ENCODE measurements at regions of chr1 and their contacts with region 1.

Region 1: GRCh38 chr1:150561974-150562445 is 12.8 kb downstream of the ADAMTSL4 start:
- DNase-seq: peak; percentile 98
- H3K4me3 Mint-ChIP-seq: peak overlapping the region; percentile 74
- H3K27ac Mint-ChIP-seq: peak overlapping the region; percentile 99
- H3K4me1 Mint-ChIP-seq: peaks cover 52% of the 10 kb centered on the region
- H3K27me3 Mint-ChIP-seq: no peaks in the 10 kb centered on the region
- CTCF ChIP-seq: no peak

Region 2: DNA sequence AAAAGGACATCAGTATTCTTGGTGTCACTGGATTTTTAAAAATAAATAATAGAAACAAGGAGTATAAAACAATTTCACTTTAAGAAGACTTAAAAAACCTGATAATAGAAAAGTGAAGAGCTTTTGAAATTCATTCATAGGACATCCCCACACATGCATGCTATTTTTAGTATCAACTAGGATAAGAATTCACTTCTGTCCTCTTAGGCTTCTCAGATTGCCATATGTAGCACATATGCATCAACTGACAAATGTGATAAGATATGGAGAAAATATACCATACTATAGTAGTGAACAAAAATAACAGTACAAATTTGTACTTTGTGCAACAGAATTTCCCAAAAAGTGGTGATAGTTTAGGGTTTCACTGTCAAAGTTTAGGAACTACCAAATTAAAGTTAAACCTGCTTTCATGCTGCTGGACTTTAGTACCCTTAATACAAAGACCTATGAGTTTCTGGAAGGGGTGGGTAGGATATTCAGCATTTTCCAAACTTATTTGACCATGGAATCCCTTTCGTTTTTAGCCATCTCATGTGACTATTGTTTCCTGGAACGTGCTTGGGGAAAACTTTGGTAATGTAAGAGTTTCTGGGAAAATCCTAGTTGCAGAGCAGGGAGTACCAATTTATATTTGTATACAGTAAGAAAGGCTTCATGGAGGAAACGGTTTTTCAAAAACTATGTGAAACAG is 178.2 kb before region 1 on chr1:
- CTCF ChIA-PET with region 1: no interaction called
- POLR2A ChIA-PET with region 1: no interaction called
- intact Hi-C with region 1: no loop called
- DNase-seq: no peak
- H3K4me3 Mint-ChIP-seq: no peak overlapping the region
- H3K27ac Mint-ChIP-seq: no peak overlapping the region
- H3K4me1 Mint-ChIP-seq: peaks cover 12% of the 10 kb centered on the region
- H3K27me3 Mint-ChIP-seq: no peaks in the 10 kb centered on the region
- CTCF ChIP-seq: no peak

Region 3: GRCh38 chr1:150429805-150430204 is 132.2 kb before region 1 on chr1:
- CTCF ChIA-PET with region 1: no interaction called
- POLR2A ChIA-PET with region 1: no interaction called
- intact Hi-C with region 1: no loop called
- DNase-seq: peak; percentile 40
- H3K4me3 Mint-ChIP-seq: no peak overlapping the region
- H3K27ac Mint-ChIP-seq: no peak overlapping the region
- H3K4me1 Mint-ChIP-seq: peaks cover 5% of the 10 kb centered on the region
- H3K27me3 Mint-ChIP-seq: no peaks in the 10 kb centered on the region
- CTCF ChIP-seq: peak; percentile 29

Region 4: GRCh38 chr1:150444232-150444631 is 117.8 kb before region 1 on chr1:
- CTCF ChIA-PET with region 1: no interaction called
- POLR2A ChIA-PET with region 1: no interaction called
- intact Hi-C with region 1: no loop called
- DNase-seq: no peak
- H3K4me3 Mint-ChIP-seq: no peak overlapping the region
- H3K27ac Mint-ChIP-seq: no peak overlapping the region
- H3K4me1 Mint-ChIP-seq: no peaks in the 10 kb centered on the region
- H3K27me3 Mint-ChIP-seq: no peaks in the 10 kb centered on the region
- CTCF ChIP-seq: no peak

Region 5: DNA sequence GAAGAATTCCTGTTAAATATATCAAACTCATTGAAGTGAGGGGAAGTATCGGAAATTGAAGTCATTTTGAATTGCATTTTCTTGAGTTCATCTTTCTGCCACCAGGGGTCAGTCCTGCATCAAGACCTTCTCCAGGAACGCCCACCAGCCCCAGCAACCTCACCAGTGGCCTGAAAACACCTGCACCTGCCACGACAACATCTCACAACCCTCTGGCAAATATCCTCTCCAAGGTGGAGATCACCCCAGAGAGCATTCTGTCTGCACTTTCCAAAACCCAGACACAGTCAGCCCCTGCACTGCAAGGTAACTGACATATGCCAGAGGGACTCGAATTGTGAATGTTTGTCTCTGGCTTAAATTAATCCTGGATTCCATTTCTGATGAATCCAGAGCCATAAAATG is 97.6 kb before region 1 on chr1:
- CTCF ChIA-PET with region 1: interaction called, 12 read pairs
- POLR2A ChIA-PET with region 1: interaction called, 3 read pairs
- intact Hi-C with region 1: loop called (anchors 1 kb)
- DNase-seq: peak; percentile 72
- H3K4me3 Mint-ChIP-seq: no peak overlapping the region
- H3K27ac Mint-ChIP-seq: no peak overlapping the region
- H3K4me1 Mint-ChIP-seq: no peaks in the 10 kb centered on the region
- H3K27me3 Mint-ChIP-seq: no peaks in the 10 kb centered on the region
- CTCF ChIP-seq: peak; percentile 80

Region 6: GRCh38 chr1:150548632-150549495 is 13.1 kb before region 1 on chr1 and contains the start of gene ADAMTSL4:
- CTCF ChIA-PET with region 1: interaction called, 77 read pairs
- POLR2A ChIA-PET with region 1: interaction called, 1,801 read pairs
- intact Hi-C with region 1: no loop called
- DNase-seq: peak; percentile 80
- H3K4me3 Mint-ChIP-seq: peak within 1 kb of the TSS; percentile 81
- H3K27ac Mint-ChIP-seq: peak within 1 kb of the TSS; percentile 78
- H3K4me1 Mint-ChIP-seq: peaks cover 28% of the 10 kb centered on the region
- H3K27me3 Mint-ChIP-seq: no peaks in the 10 kb centered on the region
- CTCF ChIP-seq: peak; percentile 15
- total RNA-seq, gene ADAMTSL4: 9.6 and 13.3 TPM in 2 replicates

Region 7: DNA sequence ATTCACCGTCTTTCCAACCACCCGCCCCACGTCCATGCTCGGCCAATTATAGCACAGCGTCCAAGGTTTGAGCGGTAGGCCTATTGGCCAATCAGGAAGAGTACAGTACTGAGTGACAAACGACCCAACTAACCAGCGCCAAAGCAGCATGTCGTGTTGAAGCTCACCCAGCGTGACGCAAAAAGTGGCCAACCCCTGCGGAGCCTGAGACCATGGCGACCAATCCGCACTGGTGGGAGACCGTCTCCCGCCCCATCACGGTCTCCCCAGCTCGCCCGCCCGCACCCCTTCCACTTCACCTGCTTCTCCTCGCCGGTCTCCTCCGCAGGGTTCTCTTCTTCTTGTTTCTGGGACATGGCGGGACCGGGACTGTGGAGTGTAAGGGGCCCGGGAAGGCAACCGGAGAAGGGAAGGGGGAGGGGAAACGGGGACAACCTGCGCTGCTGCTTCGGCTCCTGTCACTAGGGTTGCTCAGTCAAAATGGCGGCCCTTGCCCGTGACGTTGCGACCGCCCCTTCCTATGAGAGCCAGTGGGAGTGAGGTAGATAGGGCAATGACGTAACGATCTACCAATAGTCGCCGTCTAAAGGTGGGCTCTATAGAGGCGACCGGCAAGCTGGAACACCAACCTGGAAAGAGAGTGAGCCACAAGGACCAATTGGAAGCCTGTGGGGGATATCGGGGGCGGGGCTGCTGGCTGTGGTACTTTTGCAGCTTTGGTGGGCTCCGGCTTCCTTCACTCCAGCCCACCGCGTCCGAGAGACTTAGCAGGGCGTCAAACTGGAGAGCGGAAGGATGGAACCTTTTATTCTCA is 67.3 kb after region 1 on chr1 and contains the start of gene ENSA:
- CTCF ChIA-PET with region 1: interaction called, 203 read pairs
- POLR2A ChIA-PET with region 1: interaction called, 1,125 read pairs
- intact Hi-C with region 1: no loop called
- DNase-seq: peak; percentile 100
- H3K4me3 Mint-ChIP-seq: no peak within 1 kb of the TSS
- H3K27ac Mint-ChIP-seq: no peak within 1 kb of the TSS
- H3K4me1 Mint-ChIP-seq: peaks cover 44% of the 10 kb centered on the region
- H3K27me3 Mint-ChIP-seq: no peaks in the 10 kb centered on the region
- CTCF ChIP-seq: no peak
- total RNA-seq, gene ENSA: 261 and 294 TPM in 2 replicates

Region 8: GRCh38 chr1:150808121-150808520 is 246.1 kb after region 1 on chr1 and contains the start of gene CTSK:
- CTCF ChIA-PET with region 1: interaction called, 32 read pairs
- POLR2A ChIA-PET with region 1: interaction called, 25 read pairs
- intact Hi-C with region 1: loop called (anchors 1 kb)
- DNase-seq: no peak
- H3K4me3 Mint-ChIP-seq: no peak within 1 kb of the TSS
- H3K27ac Mint-ChIP-seq: no peak within 1 kb of the TSS
- H3K4me1 Mint-ChIP-seq: no peaks in the 10 kb centered on the region
- H3K27me3 Mint-ChIP-seq: no peaks in the 10 kb centered on the region
- CTCF ChIP-seq: no peak
- total RNA-seq, gene CTSK: 6.2 and 6.4 TPM in 2 replicates

Region 9: DNA sequence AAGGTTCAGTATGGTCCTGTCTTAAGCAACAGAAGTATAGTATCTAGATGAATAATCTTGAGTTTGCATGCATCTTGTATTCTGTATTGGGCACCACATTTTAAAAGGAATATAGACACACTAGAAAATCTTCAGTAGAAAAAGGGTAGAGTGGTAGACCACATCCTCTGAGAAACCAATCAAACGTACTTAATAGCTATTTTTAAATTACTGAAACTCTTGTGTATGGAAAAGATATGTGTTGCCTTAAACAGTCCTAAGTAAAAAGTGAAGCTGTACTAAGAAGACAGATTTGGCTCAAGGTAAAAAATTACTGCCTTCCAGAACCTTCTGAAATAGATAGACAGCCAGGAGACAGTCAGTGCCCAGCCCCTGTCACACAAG is 328.0 kb after region 1 on chr1:
- CTCF ChIA-PET with region 1: no interaction called
- POLR2A ChIA-PET with region 1: no interaction called
- intact Hi-C with region 1: no loop called
- DNase-seq: no peak
- H3K4me3 Mint-ChIP-seq: no peak overlapping the region
- H3K27ac Mint-ChIP-seq: no peak overlapping the region
- H3K4me1 Mint-ChIP-seq: peaks cover 12% of the 10 kb centered on the region
- H3K27me3 Mint-ChIP-seq: no peaks in the 10 kb centered on the region
- CTCF ChIP-seq: no peak

Region 10: GRCh38 chr1:150925816-150926741 is 364.1 kb after region 1 on chr1 and contains the start of gene SETDB1:
- CTCF ChIA-PET with region 1: interaction called, 20 read pairs
- POLR2A ChIA-PET with region 1: interaction called, 7 read pairs
- intact Hi-C with region 1: loop called (anchors 1 kb)
- DNase-seq: peak; percentile 99
- H3K4me3 Mint-ChIP-seq: peak within 1 kb of the TSS; percentile 98
- H3K27ac Mint-ChIP-seq: peak within 1 kb of the TSS; percentile 98
- H3K4me1 Mint-ChIP-seq: peaks cover 18% of the 10 kb centered on the region
- H3K27me3 Mint-ChIP-seq: no peaks in the 10 kb centered on the region
- CTCF ChIP-seq: no peak
- total RNA-seq, gene SETDB1: 67.4 and 69.4 TPM in 2 replicates